Gastrocnemius medialis (tissue), 4 donors: ENCODE measurements at regions of chrX and their contacts with region 1.

Region 1: GRCh38 chrX:67724359-67725110 is 180.7 kb downstream of the AR start:
- DNase-seq: peak in 1 of 2 donors; percentile 39
- ATAC-seq: peak; percentile 43 to 71
- H3K4me3 ChIP-seq: no peak overlapping the region
- H3K27ac ChIP-seq: peak overlapping the region; percentile 57 to 75 (median 67)
- H3K4me1 ChIP-seq: peaks cover 23 to 46% of the 10 kb centered on the region in 2 donors
- H3K27me3 ChIP-seq: no peaks in the 10 kb centered on the region
- CTCF ChIP-seq: peak in 2 of 5 experiments; percentile 11 to 32
- POLR2A ChIP-seq: no peak

Region 2: DNA sequence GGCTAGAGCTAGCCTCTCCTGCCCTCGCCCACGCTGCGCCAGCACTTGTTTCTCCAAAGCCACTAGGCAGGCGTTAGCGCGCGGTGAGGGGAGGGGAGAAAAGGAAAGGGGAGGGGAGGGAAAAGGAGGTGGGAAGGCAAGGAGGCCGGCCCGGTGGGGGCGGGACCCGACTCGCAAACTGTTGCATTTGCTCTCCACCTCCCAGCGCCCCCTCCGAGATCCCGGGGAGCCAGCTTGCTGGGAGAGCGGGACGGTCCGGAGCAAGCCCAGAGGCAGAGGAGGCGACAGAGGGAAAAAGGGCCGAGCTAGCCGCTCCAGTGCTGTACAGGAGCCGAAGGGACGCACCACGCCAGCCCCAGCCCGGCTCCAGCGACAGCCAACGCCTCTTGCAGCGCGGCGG is 180.7 kb before region 1 on chrX and contains the start of gene AR:
- in situ Hi-C with region 1: loop called in 1 of 4 experiments (anchors 25 kb)
- intact Hi-C with region 1: loop called (anchors 5 kb)
- DNase-seq: peak; percentile 39 to 57
- ATAC-seq: peak; percentile 38 to 43
- H3K4me3 ChIP-seq: peak within 1 kb of the TSS; percentile 57 to 72 (median 67)
- H3K27ac ChIP-seq: peak within 1 kb of the TSS; percentile 80 to 88 (median 82)
- H3K4me1 ChIP-seq: no peaks in the 10 kb centered on the region
- H3K27me3 ChIP-seq: peaks cover 0 to 5% (median 0%) of the 10 kb centered on the region in 3 donors
- CTCF ChIP-seq: no peak
- POLR2A ChIP-seq: peak; percentile 27 to 40
- total RNA-seq, gene AR: 6.8 to 9.9 (median 8.2) TPM

Region 3: DNA sequence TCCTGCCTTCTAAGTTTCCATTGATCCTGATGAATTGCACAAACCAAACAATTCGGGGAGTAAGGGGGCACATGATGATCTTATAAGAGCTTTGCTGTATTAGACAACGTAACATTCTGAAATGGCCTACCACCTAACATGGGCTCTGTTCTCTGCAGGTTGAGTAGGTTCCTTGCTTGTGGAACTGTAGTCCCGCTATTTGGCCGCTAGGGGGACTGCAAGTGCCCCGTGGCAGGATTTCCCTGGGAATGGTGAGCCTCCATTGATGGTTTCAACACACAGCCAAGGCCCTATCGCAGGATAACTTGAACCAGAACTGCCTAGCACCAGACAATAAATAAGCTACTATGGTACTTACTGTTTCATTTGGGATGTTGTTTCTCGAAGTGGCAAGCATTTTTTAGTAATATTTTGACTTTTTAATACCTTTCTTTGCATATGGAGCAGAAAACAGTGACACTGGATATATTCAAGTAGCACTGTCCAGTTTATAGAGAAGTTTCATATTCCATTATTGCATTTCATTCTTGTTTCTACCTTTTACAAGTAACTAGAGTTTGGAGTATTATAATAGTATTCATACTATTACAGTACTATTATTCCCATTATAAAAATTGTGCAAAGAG is 168.8 kb before region 1 on chrX:
- in situ Hi-C with region 1: loop called in 1 of 4 experiments (anchors 25 kb)
- intact Hi-C with region 1: loop called (anchors 5 kb)
- DNase-seq: peak in 1 of 2 donors; percentile 20
- ATAC-seq: peak in 1 of 2 donors; percentile 61
- H3K4me3 ChIP-seq: no peak overlapping the region
- H3K27ac ChIP-seq: no peak overlapping the region
- H3K4me1 ChIP-seq: peaks cover 0 to 10% of the 10 kb centered on the region in 2 donors
- H3K27me3 ChIP-seq: no peaks in the 10 kb centered on the region
- CTCF ChIP-seq: peak; percentile 40 to 72 (median 50)
- POLR2A ChIP-seq: no peak

Region 4: DNA sequence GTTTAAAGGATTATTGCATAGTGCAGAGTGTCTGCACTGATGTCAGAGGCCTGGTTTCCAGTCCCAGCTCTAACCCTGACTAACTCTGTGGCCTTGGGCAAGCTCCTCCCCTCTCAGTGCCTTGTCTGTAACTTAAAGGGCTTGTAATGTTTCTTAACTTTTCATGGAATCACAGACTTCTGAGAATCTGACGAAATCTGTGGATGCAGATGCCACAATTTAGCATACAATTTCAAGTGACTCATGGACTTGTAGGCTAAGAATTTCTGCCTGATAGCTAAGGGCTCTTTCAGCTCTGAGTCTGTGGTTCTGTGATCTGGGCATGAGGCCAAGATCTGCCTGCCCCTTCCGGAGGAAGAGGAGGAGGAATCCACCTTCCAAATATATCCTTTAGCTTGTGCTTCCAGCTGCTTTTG is 56.2 kb after region 1 on chrX:
- in situ Hi-C with region 1: no loop called
- intact Hi-C with region 1: loop called (anchors 1 kb)
- DNase-seq: peak; percentile 56 to 76
- ATAC-seq: peak; percentile 76 to 78
- H3K4me3 ChIP-seq: peak overlapping the region in 1 of 4 donors; percentile 16
- H3K27ac ChIP-seq: peak overlapping the region; percentile 78 to 88 (median 82)
- H3K4me1 ChIP-seq: peaks cover 34 to 44% of the 10 kb centered on the region in 2 donors
- H3K27me3 ChIP-seq: no peaks in the 10 kb centered on the region
- CTCF ChIP-seq: no peak
- POLR2A ChIP-seq: no peak

Region 5: GRCh38 chrX:68090275-68090674 is 365.7 kb after region 1 on chrX:
- in situ Hi-C with region 1: loop called in 1 of 4 experiments (anchors 10 kb)
- intact Hi-C with region 1: no loop called
- DNase-seq: no peak
- ATAC-seq: no peak
- H3K4me3 ChIP-seq: no peak overlapping the region
- H3K27ac ChIP-seq: no peak overlapping the region
- H3K4me1 ChIP-seq: no peaks in the 10 kb centered on the region
- H3K27me3 ChIP-seq: no peaks in the 10 kb centered on the region
- CTCF ChIP-seq: no peak
- POLR2A ChIP-seq: no peak